Naive thymus-derived CD4-positive, alpha-beta T cell (primary cell): ENCODE measurements at regions of chr3 and their contacts with region 1.

Region 1: DNA sequence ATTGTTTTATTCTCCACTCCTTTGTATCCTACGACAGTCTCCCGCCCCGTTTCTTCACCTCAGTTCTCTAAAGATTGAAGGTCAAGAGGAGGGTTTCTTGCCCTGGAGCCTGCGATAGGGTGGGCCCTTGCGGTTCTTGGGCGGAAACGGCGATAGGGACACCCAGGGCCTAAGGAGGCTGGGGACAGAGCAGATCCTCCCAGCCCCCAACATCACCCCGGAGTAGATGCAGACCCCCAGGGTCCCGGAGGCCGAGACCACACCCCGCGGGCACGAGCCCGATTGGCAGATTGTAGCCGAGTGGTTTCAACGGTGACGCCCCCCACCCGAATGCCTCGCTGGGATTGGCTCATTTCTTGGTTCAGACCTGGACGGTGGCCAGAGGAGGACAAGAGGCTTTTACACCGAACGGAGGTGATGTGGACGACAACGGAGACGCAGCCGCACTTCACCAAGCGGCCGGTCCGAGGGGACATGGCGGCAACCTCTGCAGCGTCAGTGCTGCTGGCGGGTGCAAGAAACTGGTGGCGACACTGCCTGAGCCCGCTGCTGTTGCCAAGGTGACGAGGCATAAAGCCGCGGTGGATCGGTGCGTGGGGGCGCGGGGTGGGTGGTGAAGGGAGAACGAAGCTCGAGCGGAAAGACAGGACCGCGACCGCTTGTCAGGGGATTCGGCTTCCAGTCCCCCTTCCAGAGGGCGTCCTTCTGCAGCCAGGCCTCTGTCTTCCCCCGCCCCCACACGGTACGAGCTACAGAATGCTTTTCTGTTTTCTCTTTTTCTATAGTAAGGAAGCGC is 19.0 kb upstream of the MCF2L2 start:
- DNase-seq: peak; percentile 39 to 74 (median 51)
- ATAC-seq: peak; percentile 87
- H3K4me3 ChIP-seq: peak overlapping the region; percentile 80
- H3K4me3 Mint-ChIP-seq: peak overlapping the region; percentile 88 to 99 (median 93)
- H3K27ac ChIP-seq: peak overlapping the region; percentile 47
- H3K27ac Mint-ChIP-seq: peak overlapping the region; percentile 60 to 93 (median 81)
- H3K4me1 ChIP-seq: peaks cover 5 to 12% of the 10 kb centered on the region in 2 donors
- H3K4me1 Mint-ChIP-seq: peaks cover 13 to 26% (median 17%) of the 10 kb centered on the region in 7 donors
- H3K27me3 ChIP-seq: no peaks in the 10 kb centered on the region
- H3K27me3 Mint-ChIP-seq: peaks cover 0 to 20% (median 0%) of the 10 kb centered on the region in 5 donors

Region 2: DNA sequence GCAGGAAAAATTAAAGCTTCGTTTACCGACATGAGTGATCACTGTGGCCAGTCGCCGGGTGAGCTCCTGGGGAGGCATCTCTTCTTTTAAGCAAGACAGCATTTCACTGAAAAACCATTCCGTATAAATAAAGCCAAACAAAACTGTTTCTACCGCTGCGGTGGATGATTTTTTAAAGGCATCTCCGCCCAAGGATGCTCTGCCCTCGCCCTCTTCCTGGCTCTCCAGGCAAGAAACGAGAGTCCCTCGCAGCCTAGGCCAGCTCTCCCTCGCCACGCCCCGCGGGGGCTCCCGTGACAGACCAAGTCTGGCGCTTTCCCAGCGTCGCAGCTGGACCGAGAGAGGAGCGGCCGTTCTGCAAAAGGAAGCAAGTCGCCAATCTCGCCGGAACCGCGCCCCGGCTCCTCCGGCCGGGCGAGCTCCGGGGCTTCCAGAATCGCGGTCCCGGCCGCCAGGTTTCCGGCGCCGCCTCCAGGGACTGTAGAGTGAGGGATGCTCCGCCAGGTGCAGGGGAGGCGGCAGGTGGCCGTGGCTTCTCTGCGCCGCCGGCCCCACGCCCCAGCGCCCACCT is 19.4 kb before region 1 on chr3:
- CTCF ChIA-PET with region 1: no interaction called
- POLR2A ChIA-PET with region 1: interaction called, 3 read pairs
- intact Hi-C with region 1: loop called (anchors 1 kb)
- DNase-seq: peak in 5 of 9 donors; percentile 3 to 55 (median 4)
- ATAC-seq: peak; percentile 34
- H3K4me3 ChIP-seq: peak overlapping the region; percentile 77
- H3K4me3 Mint-ChIP-seq: peak overlapping the region; percentile 66 to 90 (median 80)
- H3K27ac ChIP-seq: no peak overlapping the region
- H3K27ac Mint-ChIP-seq: peak overlapping the region in 2 of 9 donors; percentile 20 to 61
- H3K4me1 ChIP-seq: peaks cover 0 to 8% of the 10 kb centered on the region in 2 donors
- H3K4me1 Mint-ChIP-seq: peaks cover 0 to 28% (median 5%) of the 10 kb centered on the region in 7 donors
- H3K27me3 ChIP-seq: no peaks in the 10 kb centered on the region
- H3K27me3 Mint-ChIP-seq: peaks cover 0 to 29% (median 2%) of the 10 kb centered on the region in 5 donors